ENCODE measurements at regions of chr1 and their contacts with region 1.

Region 1: DNA sequence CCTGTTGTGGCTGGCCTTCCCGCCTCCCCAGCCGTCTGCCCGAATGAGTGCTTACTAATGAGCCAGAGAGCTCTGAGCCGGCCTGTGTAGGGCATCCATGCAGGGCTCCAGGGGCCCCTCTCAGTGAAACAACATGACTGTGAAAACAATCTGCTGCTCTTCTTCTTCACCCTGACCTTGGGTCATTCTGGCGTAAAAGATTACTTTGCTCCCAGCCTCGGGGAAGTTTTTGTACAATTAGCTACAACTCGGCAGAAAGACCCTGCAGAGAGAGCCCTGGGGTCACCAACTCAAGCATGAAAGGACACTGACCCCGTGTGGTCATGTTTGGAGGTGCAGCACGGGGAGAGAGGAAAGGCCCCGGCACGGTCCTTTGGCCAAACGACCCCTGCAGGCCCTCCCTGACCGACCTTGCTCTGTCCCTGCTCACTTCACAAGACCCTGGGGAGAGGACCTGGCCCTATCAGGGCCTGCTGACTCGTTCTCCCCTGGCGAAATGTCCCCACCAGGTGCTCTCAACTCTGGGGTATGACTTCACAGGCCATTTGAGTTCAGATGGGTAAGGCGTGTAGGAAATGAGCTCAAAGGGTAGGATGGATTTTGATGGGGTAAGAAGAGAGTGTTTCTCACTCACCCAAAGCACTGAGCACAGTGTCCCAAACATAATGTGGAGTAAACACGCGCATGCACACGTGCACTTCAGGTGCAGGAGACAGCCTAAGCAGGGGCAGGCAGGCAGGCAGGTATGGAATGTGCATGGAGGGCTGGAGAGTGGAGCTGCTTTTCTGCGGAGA is 22.9 kb upstream of the FAM20B start:
- DNase-seq: peak; percentile 40 to 68 (median 54)
- H3K4me3 ChIP-seq: no peak overlapping the region
- H3K4me3 Mint-ChIP-seq: peak overlapping the region in 4 of 7 donors; percentile 27 to 72 (median 57)
- H3K27ac ChIP-seq: no peak overlapping the region
- H3K27ac Mint-ChIP-seq: peak overlapping the region; percentile 15 to 91 (median 78)
- H3K4me1 ChIP-seq: peaks cover 24% of the 10 kb centered on the region
- H3K4me1 Mint-ChIP-seq: peaks cover 21 to 27% (median 22%) of the 10 kb centered on the region in 3 donors
- H3K27me3 ChIP-seq: no peaks in the 10 kb centered on the region
- H3K27me3 Mint-ChIP-seq: peaks cover 0 to 2% of the 10 kb centered on the region in 2 donors

Region 2: GRCh38 chr1:178542560-178543356 is 460.0 kb before region 1 on chr1:
- CTCF ChIA-PET with region 1: interaction called, 23 read pairs
- POLR2A ChIA-PET with region 1: no interaction called
- DNase-seq: peak; percentile 73 to 85 (median 80)
- H3K4me3 ChIP-seq: peak overlapping the region; percentile 92
- H3K4me3 Mint-ChIP-seq: peak overlapping the region; percentile 92 to 98 (median 92)
- H3K27ac ChIP-seq: peak overlapping the region; percentile 43
- H3K27ac Mint-ChIP-seq: peak overlapping the region; percentile 36 to 94 (median 84)
- H3K4me1 ChIP-seq: peaks cover 11% of the 10 kb centered on the region
- H3K4me1 Mint-ChIP-seq: peaks cover 5 to 27% (median 17%) of the 10 kb centered on the region in 3 donors
- H3K27me3 ChIP-seq: no peaks in the 10 kb centered on the region
- H3K27me3 Mint-ChIP-seq: peaks cover 0 to 4% of the 10 kb centered on the region in 2 donors

Region 3: DNA sequence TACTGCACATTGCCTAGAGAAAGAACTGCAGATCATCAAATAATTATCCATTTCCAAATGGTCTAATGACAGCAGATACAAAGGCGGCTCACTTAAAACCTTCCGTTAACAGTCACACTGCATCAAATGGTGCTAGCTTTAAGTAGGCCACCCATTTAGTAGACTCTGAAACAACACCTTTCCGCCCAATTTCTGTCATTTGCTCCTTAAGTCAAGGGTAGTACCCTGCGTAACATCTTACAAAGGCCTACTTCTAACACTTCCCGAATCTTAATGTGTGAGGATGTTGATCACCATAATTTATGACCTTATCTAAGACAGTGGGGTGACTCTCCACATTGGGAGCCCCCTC is 278.4 kb before region 1 on chr1:
- CTCF ChIA-PET with region 1: no interaction called
- POLR2A ChIA-PET with region 1: no interaction called
- DNase-seq: no peak
- H3K4me3 ChIP-seq: peak overlapping the region; percentile 38
- H3K4me3 Mint-ChIP-seq: peak overlapping the region; percentile 81 to 89 (median 84)
- H3K27ac ChIP-seq: no peak overlapping the region
- H3K27ac Mint-ChIP-seq: peak overlapping the region in 4 of 8 donors; percentile 40 to 87 (median 54)
- H3K4me1 ChIP-seq: peaks cover 8% of the 10 kb centered on the region
- H3K4me1 Mint-ChIP-seq: peaks cover 18 to 26% (median 22%) of the 10 kb centered on the region in 3 donors
- H3K27me3 ChIP-seq: no peaks in the 10 kb centered on the region
- H3K27me3 Mint-ChIP-seq: peaks cover 16 to 53% of the 10 kb centered on the region in 2 donors